K562 (cell line): ENCODE measurements at regions of chr3 and their contacts with region 1.

Region 1: DNA sequence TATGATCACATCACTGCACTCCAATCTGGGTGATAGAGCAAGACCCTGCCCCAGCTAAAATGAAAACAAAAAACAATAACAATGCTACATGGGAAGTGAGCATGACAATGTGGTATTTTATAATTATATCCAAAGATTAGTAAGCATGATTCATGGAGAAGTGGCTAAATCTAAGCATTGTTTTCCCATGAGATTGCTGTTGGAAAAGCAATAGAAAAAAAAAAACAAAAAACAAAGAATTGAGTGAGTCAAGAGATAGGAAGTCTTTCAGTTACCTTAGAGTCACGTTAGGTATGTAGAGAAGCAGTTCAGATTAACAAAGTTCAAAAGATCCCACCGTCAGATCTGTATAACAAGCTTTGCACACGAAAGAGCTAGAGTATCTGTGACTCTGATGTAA is 210.3 kb upstream of the CNTN6 start:
- DNase-seq: no peak
- ATAC-seq: no peak
- H3K4me3 ChIP-seq: no peak overlapping the region
- H3K27ac ChIP-seq: no peak overlapping the region
- H3K4me1 ChIP-seq: no peaks in the 10 kb centered on the region
- H3K27me3 ChIP-seq: no peaks in the 10 kb centered on the region
- CTCF ChIP-seq: no peak
- EP300 ChIP-seq: no peak
- POLR2A ChIP-seq: no peak
- RAD21 ChIP-seq: no peak

Region 2: DNA sequence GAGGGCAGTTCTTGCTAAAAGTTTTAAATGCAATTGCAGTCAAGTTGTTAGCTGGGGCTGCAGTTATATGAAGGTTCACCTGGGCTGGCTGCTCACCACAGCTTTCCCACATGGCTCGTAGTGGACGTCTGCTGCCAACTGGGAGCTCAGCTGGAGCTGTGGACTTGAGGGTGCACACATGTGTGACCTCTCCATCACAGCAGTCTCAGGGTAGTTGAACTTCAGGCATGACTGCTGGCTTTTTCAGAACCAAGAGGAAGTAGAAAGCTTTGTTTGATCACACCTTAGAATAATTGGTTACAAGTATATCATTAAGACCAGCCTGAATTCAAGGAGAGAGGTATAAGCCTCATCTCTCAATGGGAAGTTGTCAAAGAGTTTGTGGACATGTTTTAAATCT is 611.8 kb before region 1 on chr3:
- CTCF ChIA-PET with region 1: no interaction called
- POLR2A ChIA-PET with region 1: no interaction called
- in situ Hi-C with region 1: no loop called
- intact Hi-C with region 1: no loop called
- DNase-seq: no peak
- ATAC-seq: no peak
- H3K4me3 ChIP-seq: no peak overlapping the region
- H3K27ac ChIP-seq: no peak overlapping the region
- H3K4me1 ChIP-seq: no peaks in the 10 kb centered on the region
- H3K27me3 ChIP-seq: no peaks in the 10 kb centered on the region
- CTCF ChIP-seq: no peak
- EP300 ChIP-seq: no peak
- POLR2A ChIP-seq: no peak
- RAD21 ChIP-seq: no peak

Region 3: DNA sequence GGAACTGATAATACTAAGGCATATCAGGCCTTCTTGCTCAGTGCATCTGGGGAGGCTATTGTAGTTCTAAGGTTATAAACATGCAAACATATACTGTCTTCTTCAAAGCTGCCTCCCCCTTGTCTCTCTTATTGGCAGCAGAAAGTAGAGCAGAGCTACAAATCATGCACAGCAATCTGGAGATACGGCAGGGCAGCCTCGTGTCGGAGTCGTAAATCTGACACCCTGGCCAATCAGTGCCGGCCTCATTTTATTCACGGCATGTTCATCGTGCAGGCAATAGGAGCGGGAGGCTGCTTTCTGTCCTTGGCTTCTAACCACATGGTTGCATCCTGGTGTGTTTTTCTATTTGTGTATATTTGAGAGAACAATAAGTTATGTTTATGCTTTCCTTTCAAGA is 89.9 kb before region 1 on chr3:
- CTCF ChIA-PET with region 1: no interaction called
- POLR2A ChIA-PET with region 1: no interaction called
- in situ Hi-C with region 1: no loop called
- intact Hi-C with region 1: no loop called
- DNase-seq: no peak
- ATAC-seq: no peak
- H3K4me3 ChIP-seq: no peak overlapping the region
- H3K27ac ChIP-seq: no peak overlapping the region
- H3K4me1 ChIP-seq: no peaks in the 10 kb centered on the region
- H3K27me3 ChIP-seq: no peaks in the 10 kb centered on the region
- CTCF ChIP-seq: no peak
- EP300 ChIP-seq: no peak
- POLR2A ChIP-seq: no peak
- RAD21 ChIP-seq: no peak

Region 4: DNA sequence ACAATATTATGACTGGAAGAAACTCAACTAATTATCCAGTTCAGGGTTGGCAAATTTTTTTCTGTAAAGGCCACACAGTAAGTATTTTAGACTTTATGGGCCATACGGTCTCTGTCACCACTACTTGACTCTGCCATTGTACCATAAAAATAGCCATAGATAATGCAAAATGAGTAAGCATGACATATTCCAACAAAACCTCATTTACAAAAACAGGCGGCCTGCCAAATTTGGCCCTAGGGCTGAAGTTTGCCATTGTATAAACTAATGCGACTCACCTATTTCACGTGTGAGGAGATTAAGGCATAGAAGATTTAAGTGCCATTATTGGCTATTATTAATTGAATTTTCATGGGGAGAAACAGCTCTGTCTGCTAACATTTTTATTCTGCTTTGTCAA is 93.5 kb after region 1 on chr3:
- CTCF ChIA-PET with region 1: no interaction called
- POLR2A ChIA-PET with region 1: no interaction called
- in situ Hi-C with region 1: loop called (anchors 5 kb)
- intact Hi-C with region 1: no loop called
- DNase-seq: no peak
- ATAC-seq: no peak
- H3K4me3 ChIP-seq: no peak overlapping the region
- H3K27ac ChIP-seq: no peak overlapping the region
- H3K4me1 ChIP-seq: no peaks in the 10 kb centered on the region
- H3K27me3 ChIP-seq: no peaks in the 10 kb centered on the region
- CTCF ChIP-seq: no peak
- EP300 ChIP-seq: no peak
- POLR2A ChIP-seq: no peak
- RAD21 ChIP-seq: no peak